ENCODE measurements at regions of chr6 and their contacts with region 1.

Region 1: DNA sequence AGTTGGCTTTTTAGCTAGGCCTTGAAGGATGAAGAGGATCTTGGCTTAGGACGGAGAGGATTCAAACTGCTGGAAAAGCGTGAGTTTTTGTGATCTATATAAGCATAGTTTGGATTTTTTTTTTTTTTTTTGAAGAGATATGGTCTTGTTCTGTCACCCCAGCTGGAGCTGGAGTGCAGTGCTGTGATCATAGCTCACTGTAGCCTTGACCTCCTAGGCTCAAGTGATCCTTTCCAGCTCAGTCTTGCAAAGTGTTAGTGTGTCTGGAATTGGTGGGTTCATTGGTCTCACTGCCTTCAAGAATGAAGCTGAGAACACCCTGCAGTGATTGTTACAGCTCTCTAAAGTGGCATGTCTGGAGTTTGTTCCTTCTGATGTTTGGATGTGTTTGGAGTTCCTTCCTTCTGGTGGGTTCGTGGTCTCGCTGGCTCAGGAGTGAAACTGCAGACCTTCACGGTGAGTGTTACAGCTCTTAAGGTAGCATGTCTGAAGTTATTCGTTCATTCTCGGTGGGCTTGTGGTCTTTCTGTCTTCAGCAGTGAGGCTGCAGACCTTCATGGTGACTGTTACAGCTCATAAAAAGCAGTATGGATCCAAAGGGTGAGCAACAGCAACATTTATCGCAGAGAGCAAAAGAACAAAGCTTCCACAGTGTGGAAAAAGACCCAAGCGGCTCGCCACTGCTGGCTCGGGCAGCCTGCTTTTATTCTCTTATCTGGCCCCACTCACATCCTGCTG is 37.5 kb upstream of the NUP153 start:
- DNase-seq: peak; percentile 30
- ATAC-seq: peak; percentile 79
- H3K4me3 ChIP-seq: peak overlapping the region; percentile 51 to 63 (median 58); a peak in 5 of 6 replicates
- H3K27ac ChIP-seq: peak overlapping the region; percentile 61
- H3K4me1 ChIP-seq: peaks cover 35% of the 10 kb centered on the region
- H3K27me3 ChIP-seq: no peaks in the 10 kb centered on the region; a peak in 1 of 5 replicates
- CTCF ChIP-seq: no peak
- EP300 ChIP-seq: no peak
- POLR2A ChIP-seq: peak; percentile 47 to 67; a peak in 3 of 4 replicates
- RAD21 ChIP-seq: no peak

Region 2: DNA sequence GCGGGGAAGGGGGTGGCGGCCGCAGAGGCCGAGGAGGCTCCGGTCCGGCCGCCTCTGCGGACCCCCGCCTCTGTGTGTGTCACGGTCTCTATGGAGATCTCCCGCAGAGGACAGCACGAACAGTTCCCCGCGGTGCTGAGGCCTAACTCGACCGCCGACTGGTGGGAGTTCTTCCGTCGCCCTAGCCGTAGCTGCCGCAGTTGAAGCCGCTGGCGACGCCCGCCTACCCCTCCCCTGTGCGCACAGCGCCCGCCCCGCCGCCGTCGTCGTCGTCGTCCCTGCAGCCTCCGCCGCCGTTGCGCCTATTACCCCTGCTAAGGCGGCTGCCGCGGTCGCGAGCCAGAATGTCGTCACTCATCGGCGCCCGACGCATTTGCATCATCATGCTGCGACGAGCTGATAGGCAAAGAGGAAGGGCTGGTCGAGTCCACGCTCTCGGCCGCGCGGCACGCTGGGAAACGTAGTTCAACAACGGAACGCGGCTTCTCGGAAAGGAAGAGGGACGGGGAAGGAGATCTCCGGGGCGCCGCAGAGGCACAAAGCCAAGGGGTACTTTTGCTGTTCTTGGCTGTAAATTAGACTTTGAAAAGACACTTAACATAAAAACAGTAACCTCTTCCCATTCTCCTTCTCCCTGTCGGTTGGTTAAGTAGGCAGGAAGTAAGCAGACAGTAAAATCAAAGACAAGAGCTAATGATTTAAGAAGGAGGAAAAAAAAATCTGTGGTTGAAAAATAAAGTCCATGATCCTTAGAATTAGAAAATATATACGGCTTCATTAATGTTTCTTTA is 37.4 kb before region 1 on chr6 and contains the start of gene NUP153:
- CTCF ChIA-PET with region 1: interaction called, 3 read pairs
- POLR2A ChIA-PET with region 1: interaction called, 13 read pairs
- in situ Hi-C with region 1: no loop called
- intact Hi-C with region 1: no loop called
- DNase-seq: peak; percentile 98
- ATAC-seq: peak; percentile 85
- H3K4me3 ChIP-seq: peak within 1 kb of the TSS; percentile 79 to 86 (median 84)
- H3K27ac ChIP-seq: peak within 1 kb of the TSS; percentile 94
- H3K4me1 ChIP-seq: peaks cover 50% of the 10 kb centered on the region
- H3K27me3 ChIP-seq: no peaks in the 10 kb centered on the region; a peak in 1 of 5 replicates
- CTCF ChIP-seq: peak; percentile 43
- EP300 ChIP-seq: peak; percentile 62 to 85
- POLR2A ChIP-seq: peak; percentile 92 to 96
- RAD21 ChIP-seq: no peak; the same call in none of the 2 replicates
- total RNA-seq, gene NUP153: 55.2 and 93.0 TPM in 2 replicates

Region 3: DNA sequence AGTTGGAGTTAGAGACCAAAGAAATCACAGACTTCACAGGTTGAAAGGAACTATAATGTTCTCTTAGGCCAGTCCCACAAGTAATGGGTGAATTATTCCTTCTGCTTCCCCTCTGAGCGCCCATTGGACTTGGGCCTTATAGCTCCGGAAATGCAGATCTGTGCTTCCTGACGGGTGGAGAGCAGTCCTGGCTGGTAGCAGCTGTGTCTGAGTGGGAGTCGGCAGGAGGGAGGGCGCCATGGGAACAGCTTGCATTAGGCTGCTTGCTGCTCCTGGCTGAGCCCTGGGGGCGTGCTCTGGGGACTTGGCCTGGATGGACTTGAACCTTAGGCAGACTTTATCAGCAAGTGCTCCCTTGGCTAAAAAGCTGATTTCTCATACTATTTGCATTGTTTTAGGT is 19.1 kb before region 1 on chr6:
- CTCF ChIA-PET with region 1: no interaction called
- POLR2A ChIA-PET with region 1: interaction called, 10 read pairs
- in situ Hi-C with region 1: no loop called
- intact Hi-C with region 1: no loop called
- DNase-seq: peak; percentile 82
- ATAC-seq: peak; percentile 99
- H3K4me3 ChIP-seq: peak overlapping the region in 2 of 3 experiments; percentile 12 to 38; a peak in 3 of 6 replicates
- H3K27ac ChIP-seq: peak overlapping the region; percentile 7
- H3K4me1 ChIP-seq: peaks cover 36% of the 10 kb centered on the region
- H3K27me3 ChIP-seq: no peaks in the 10 kb centered on the region; a peak in 1 of 5 replicates
- CTCF ChIP-seq: peak; percentile 59
- EP300 ChIP-seq: peak in 1 of 2 experiments; percentile 71; a peak in 1 of 4 replicates
- POLR2A ChIP-seq: no peak
- RAD21 ChIP-seq: no peak